ENCODE measurements at regions of chr20 and their contacts with region 1.

Region 1: GRCh38 chr20:38023181-38024001 is 9.9 kb downstream of the TTI1 start:
- DNase-seq: no peak
- H3K4me3 ChIP-seq: no peak overlapping the region
- H3K27ac ChIP-seq: no peak overlapping the region
- H3K4me1 ChIP-seq: peaks cover 0 to 13% (median 2%) of the 10 kb centered on the region in 4 donors
- H3K27me3 ChIP-seq: no peaks in the 10 kb centered on the region
- CTCF ChIP-seq: no peak
- EP300 ChIP-seq: no peak
- POLR2A ChIP-seq: no peak

Region 2: DNA sequence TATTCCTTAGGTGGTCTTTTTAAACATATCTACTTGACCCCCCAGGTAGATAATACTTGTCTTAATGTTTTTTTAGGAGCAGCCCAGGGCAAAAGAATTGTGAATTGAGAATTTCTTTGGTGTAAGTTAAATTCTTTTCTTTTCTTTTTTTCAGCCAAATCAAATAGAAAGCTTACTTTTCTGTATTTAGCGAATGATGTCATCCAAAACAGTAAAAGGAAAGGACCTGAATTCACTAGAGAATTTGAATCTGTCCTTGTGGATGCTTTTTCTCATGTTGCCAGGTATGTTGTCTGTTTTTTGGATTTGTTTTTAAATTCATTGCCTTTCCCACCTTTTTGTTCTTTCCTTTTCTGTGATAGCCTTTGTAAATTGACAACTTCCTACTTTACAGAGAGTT is 16.9 kb after region 1 on chr20:
- intact Hi-C with region 1: loop called (anchors 2 kb)
- DNase-seq: no peak
- H3K4me3 ChIP-seq: no peak overlapping the region
- H3K27ac ChIP-seq: no peak overlapping the region
- H3K4me1 ChIP-seq: peaks cover 0 to 34% (median 26%) of the 10 kb centered on the region in 4 donors
- H3K27me3 ChIP-seq: no peaks in the 10 kb centered on the region
- CTCF ChIP-seq: no peak
- EP300 ChIP-seq: no peak
- POLR2A ChIP-seq: no peak